ENCODE measurements at regions of chr3 and their contacts with region 1.

Region 1: GRCh38 chr3:163614886-163615285 is 1463.4 kb downstream of the SI start:
- DNase-seq: no peak
- H3K4me3 ChIP-seq: no peak overlapping the region
- H3K27ac ChIP-seq: peak overlapping the region; percentile 99
- H3K4me1 ChIP-seq: peaks cover 28% of the 10 kb centered on the region
- H3K27me3 ChIP-seq: no peaks in the 10 kb centered on the region
- CTCF ChIP-seq: no peak

Region 2: DNA sequence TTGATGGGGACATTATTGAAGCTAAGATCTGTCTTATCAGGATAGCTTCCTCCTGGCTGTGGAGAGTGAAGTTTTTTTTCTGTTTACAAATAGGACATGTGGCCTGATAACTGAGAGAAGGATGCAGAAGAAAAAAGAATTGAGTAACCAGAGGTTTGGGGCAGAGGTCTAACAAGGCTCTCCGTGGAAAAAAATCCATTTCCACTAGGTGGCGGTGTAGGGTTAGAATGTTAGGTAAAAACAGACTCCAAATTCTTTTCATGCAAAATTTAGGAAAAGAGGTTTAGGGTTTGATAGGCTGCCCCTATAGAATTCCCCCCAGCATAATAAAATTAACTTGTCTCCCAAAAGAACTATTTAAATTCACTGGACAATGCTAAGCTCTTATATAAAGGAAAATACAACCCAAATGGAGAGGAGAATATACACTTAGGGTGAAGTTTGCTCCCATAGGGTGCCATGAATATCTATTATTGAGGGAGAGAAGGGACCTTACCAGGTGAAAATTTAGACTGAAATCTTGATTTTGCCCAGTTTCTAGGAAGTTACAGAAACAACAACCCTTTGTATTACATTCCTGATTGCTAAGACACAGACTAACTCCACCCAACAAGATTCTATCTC is 557.9 kb before region 1 on chr3:
- CTCF ChIA-PET with region 1: no interaction called
- POLR2A ChIA-PET with region 1: no interaction called
- intact Hi-C with region 1: loop called (anchors 5 kb)
- DNase-seq: peak; percentile 88
- H3K4me3 ChIP-seq: no peak overlapping the region
- H3K27ac ChIP-seq: peak overlapping the region; percentile 41
- H3K4me1 ChIP-seq: no peaks in the 10 kb centered on the region
- H3K27me3 ChIP-seq: no peaks in the 10 kb centered on the region
- CTCF ChIP-seq: peak; percentile 67

Region 3: GRCh38 chr3:163185721-163186350 is 429.1 kb before region 1 on chr3:
- CTCF ChIA-PET with region 1: no interaction called
- POLR2A ChIA-PET with region 1: no interaction called
- intact Hi-C with region 1: loop called (anchors 1 kb)
- DNase-seq: peak; percentile 92
- H3K4me3 ChIP-seq: no peak overlapping the region
- H3K27ac ChIP-seq: peak overlapping the region; percentile 99
- H3K4me1 ChIP-seq: peaks cover 22% of the 10 kb centered on the region
- H3K27me3 ChIP-seq: no peaks in the 10 kb centered on the region
- CTCF ChIP-seq: no peak

Region 4: DNA sequence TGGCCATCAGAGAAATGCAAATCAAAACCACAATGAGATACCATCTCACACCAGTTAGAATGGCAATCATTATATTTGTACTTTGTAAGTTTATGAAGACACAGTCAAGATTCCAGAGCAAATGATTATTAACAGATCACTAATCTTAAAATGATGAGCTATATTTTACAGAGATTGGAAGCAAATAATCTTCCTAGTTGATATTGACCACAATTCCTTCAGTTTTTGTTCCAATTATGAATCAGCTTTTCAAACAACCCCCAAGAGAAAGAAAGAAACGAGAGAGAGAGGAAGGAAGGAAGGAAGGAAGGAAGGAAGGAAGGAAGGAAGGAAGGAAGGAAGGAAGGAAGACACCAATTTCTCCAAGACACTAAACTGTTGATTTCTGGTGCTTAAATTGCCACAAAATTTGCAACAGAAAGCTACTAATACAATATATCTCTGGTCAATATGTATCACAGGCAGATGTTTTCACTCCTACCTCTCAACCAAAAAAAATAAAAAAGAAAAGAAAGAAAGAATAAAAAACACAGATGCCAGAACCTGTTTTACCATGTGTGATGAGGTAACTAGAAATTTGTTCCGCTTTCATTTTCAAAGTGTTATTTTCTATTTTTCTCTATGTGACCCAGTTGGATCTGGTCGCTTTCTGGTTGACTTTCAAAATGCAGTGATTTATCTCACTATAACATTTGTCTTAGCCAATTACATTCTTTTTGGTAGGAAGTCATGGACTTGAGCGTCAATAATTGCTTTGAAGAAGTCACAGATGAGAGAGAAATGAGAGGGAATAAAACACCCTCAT is 146.2 kb before region 1 on chr3:
- CTCF ChIA-PET with region 1: no interaction called
- POLR2A ChIA-PET with region 1: interaction called, 11 read pairs
- intact Hi-C with region 1: loop called (anchors 1 kb)
- DNase-seq: peak; percentile 88
- H3K4me3 ChIP-seq: no peak overlapping the region
- H3K27ac ChIP-seq: peak overlapping the region; percentile 98
- H3K4me1 ChIP-seq: peaks cover 14% of the 10 kb centered on the region
- H3K27me3 ChIP-seq: no peaks in the 10 kb centered on the region
- CTCF ChIP-seq: no peak

Region 5: GRCh38 chr3:163684651-163685050 is 69.8 kb after region 1 on chr3:
- CTCF ChIA-PET with region 1: no interaction called
- POLR2A ChIA-PET with region 1: no interaction called
- intact Hi-C with region 1: no loop called
- DNase-seq: no peak
- H3K4me3 ChIP-seq: no peak overlapping the region
- H3K27ac ChIP-seq: no peak overlapping the region
- H3K4me1 ChIP-seq: no peaks in the 10 kb centered on the region
- H3K27me3 ChIP-seq: no peaks in the 10 kb centered on the region
- CTCF ChIP-seq: no peak

Region 6: DNA sequence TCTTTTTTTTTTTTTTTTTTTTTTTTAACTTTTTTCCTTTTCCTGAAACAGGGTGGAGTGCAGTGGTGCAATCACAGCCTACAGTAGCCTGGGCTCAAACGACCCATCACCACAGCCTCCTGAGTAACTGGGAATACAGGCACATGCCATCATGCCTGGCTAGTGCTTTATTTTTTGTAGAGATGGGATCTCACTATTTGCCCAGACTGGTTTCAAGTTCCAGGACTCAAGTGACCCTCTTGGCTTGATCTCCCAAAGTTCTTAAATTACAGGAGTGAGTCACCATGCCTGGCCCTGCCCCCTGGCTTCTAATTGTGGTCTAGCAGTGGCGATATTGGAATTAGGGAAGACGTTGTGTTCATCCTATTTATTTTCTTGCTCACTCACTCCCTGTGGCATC is 325.0 kb after region 1 on chr3:
- CTCF ChIA-PET with region 1: no interaction called
- POLR2A ChIA-PET with region 1: no interaction called
- intact Hi-C with region 1: no loop called
- DNase-seq: peak; percentile 47
- H3K4me3 ChIP-seq: no peak overlapping the region
- H3K27ac ChIP-seq: no peak overlapping the region
- H3K4me1 ChIP-seq: no peaks in the 10 kb centered on the region
- H3K27me3 ChIP-seq: no peaks in the 10 kb centered on the region
- CTCF ChIP-seq: no peak

Region 7: DNA sequence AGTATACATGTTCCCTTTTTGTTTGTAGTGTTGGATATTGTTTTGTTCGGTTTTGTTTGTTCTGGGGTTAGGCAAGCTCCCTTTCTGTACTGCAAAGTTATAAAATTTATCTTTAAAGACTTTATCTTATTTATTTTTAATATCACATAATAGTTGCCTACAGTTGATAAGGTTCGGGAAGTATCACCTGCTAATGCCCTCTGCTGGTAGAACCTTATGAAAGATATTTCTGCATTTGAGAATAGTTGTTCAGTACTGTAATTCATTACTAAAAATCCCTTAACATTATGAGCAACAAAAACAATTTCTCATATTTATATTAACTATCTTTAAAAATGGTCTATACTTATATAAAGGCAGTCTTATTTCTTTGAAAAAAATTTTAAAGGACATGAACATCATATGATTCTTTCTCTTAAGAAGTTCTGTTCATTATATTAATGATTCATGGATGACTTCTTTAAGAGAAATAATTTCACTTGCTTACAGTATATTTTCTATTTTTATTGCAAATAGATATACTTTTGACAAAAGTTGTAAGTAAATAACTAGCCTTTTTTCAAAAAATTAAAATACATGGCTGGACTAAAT is 336.6 kb after region 1 on chr3:
- CTCF ChIA-PET with region 1: no interaction called
- POLR2A ChIA-PET with region 1: no interaction called
- intact Hi-C with region 1: loop called (anchors 10 kb)
- DNase-seq: peak; percentile 33
- H3K4me3 ChIP-seq: no peak overlapping the region
- H3K27ac ChIP-seq: no peak overlapping the region
- H3K4me1 ChIP-seq: peaks cover 3% of the 10 kb centered on the region
- H3K27me3 ChIP-seq: no peaks in the 10 kb centered on the region
- CTCF ChIP-seq: peak; percentile 73

Region 8: DNA sequence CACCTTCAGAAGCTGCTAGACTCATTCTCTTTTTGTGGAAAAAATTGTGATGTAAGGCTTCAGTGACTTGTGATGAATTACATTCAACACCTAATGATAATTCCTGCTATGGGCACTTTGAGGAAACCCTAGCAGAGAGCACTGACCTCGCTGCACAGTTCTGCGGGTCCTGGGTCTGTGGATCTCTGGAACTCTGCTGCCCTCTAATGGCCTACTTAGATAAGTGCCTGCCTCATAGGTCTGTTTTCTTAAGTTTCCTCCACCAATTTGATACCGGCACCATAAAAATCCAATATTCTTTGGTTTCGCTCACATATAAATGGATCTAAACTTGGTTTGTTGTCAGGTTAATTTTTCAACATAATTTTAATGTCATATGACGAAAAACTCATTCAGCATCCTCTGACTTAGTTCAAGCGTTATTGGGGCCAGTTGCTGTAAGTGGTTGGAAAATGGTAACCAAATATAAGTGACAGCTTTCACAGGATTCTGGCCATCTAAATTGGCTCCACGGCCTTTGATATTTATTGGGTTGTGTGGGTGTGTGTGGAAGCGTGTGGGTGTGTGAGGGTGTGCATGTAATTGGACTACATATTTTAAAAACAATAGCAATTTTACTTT is 1570.9 kb after region 1 on chr3:
- CTCF ChIA-PET with region 1: no interaction called
- POLR2A ChIA-PET with region 1: no interaction called
- intact Hi-C with region 1: loop called (anchors 2 kb)
- DNase-seq: peak; percentile 80
- H3K4me3 ChIP-seq: no peak overlapping the region
- H3K27ac ChIP-seq: no peak overlapping the region
- H3K4me1 ChIP-seq: peaks cover 20% of the 10 kb centered on the region
- H3K27me3 ChIP-seq: no peaks in the 10 kb centered on the region
- CTCF ChIP-seq: peak; percentile 87

Region 9: DNA sequence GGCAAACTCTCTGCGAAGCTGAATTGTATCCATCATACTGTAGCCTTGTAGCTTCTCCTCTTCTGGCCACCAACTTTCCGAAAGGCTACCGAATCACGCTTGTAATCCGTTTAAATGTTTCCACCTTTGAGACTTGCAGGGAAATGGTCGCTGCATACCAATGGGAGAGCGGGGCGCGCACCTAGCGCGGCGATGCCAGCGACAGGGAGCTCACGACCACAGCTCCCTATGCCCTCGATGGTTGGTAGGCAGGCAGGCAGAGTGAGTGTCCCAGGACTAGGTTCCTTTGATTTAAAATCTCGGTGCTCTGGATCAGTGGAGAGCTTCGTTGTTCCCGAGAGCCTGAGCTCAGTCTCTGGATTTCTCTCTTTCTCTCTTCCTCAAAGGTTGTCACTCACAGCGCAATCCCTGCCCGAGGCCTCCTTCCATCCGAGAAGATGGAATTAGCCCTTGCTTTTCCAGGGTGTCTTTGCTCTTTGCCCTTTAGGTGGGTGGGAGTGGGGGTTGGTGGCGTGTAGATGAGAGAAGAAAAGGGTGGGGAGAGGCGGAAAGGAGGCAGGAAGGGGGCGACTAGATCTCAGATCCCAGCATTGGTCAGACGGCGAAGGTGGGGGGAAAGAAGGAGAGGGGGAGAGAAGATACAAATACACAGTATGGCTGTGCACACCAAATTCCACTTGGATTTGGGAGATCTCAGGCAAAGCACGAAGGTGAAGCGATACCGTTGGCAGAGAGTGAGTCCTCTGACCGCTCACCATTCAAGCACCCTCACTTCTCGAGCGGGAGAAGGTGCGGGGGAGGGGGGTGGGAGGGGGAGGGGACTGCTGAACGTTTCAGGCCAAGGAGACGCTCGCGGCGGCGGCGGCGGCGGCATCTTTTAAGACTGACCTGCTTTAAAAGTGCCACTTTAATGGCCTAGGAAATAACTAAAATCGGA is 1581.0 kb after region 1 on chr3 and contains the start of gene SLITRK3:
- CTCF ChIA-PET with region 1: interaction called, 21 read pairs
- POLR2A ChIA-PET with region 1: no interaction called
- intact Hi-C with region 1: no loop called
- DNase-seq: peak; percentile 35
- H3K4me3 ChIP-seq: peak within 1 kb of the TSS; percentile 66
- H3K27ac ChIP-seq: peak within 1 kb of the TSS; percentile 51
- H3K4me1 ChIP-seq: no peaks in the 10 kb centered on the region
- H3K27me3 ChIP-seq: no peaks in the 10 kb centered on the region
- CTCF ChIP-seq: no peak
- total RNA-seq, gene SLITRK3: 5.2 and 5.4 TPM in 2 replicates

Measured in A673 (cell line).